PC-9 (cell line): ENCODE measurements at regions of chr10 and their contacts with region 1.

Region 1: GRCh38 chr10:21336476-21337170 is 188.9 kb downstream of the SKIDA1 start:
- DNase-seq: peak; percentile 81 to 85
- H3K4me3 ChIP-seq: peak overlapping the region; percentile 8; the same call in 1 of the 2 replicates
- H3K27ac ChIP-seq: peak overlapping the region; percentile 92
- H3K4me1 ChIP-seq: peaks cover 54% of the 10 kb centered on the region
- H3K27me3 ChIP-seq: no peaks in the 10 kb centered on the region
- CTCF ChIP-seq: no peak

Region 2: GRCh38 chr10:21194464-21194993 is 142.1 kb before region 1 on chr10:
- CTCF ChIA-PET with region 1: no interaction called
- POLR2A ChIA-PET with region 1: no interaction called
- intact Hi-C with region 1: loop called (anchors 1 kb)
- DNase-seq: peak; percentile 76 to 95
- H3K4me3 ChIP-seq: peak overlapping the region; percentile 13; the same call in 1 of the 2 replicates
- H3K27ac ChIP-seq: peak overlapping the region; percentile 96
- H3K4me1 ChIP-seq: peaks cover 50% of the 10 kb centered on the region
- H3K27me3 ChIP-seq: no peaks in the 10 kb centered on the region
- CTCF ChIP-seq: no peak

Region 3: DNA sequence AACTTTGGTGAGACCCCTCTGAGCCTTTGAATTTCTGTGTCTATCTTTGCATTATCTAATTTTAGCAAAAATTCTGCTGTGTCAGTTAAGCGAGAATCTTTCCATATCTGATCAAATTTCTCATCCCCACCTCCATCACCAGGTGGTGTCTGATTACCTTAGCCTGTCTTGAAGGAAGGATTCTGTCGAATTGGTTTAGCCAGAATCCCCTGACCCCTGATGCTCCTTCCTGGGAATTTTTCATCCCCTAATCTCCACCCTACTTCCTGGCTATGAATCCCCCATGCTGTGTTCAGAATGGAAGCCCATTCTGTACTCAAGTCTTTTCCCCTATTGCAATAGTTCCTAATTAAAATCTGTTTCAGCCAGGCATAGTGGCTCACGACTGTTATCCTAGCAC is 27.2 kb before region 1 on chr10:
- CTCF ChIA-PET with region 1: interaction called, 12 read pairs
- POLR2A ChIA-PET with region 1: no interaction called
- intact Hi-C with region 1: no loop called
- DNase-seq: no peak
- H3K4me3 ChIP-seq: no peak overlapping the region
- H3K27ac ChIP-seq: no peak overlapping the region
- H3K4me1 ChIP-seq: peaks cover 3% of the 10 kb centered on the region
- H3K27me3 ChIP-seq: no peaks in the 10 kb centered on the region
- CTCF ChIP-seq: no peak

Region 4: DNA sequence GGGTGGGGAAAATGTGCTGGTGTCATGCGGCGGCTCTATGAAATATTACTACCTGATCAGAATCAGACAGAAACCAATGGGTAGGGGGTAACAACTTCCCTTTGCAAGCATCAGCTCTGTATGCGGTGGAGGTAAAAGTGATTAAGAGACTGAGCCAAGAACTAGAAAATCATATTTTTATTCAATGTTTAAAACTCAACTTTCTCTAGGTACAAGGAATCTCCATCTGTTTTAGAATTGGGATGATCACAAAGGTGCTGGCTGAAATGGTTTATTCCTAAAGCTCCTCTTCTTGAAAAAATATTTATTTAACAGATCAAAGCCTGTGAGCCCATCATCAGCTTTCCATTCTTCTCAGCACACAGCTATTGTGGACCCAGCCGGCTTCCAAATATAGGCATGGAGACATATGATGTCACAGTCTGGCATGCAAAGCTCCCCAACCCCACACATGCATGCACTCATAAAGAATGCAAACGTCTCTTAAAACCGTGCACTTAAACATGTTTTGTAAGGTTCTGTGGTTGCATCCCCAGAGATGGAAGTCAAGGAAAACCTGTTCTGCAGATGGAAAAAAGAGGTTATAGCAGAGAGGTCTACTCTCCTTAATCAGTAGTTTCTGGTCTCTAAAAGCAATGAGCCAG is 62.9 kb after region 1 on chr10:
- CTCF ChIA-PET with region 1: no interaction called
- POLR2A ChIA-PET with region 1: no interaction called
- intact Hi-C with region 1: loop called (anchors 2 kb)
- DNase-seq: peak; percentile 44 to 66
- H3K4me3 ChIP-seq: no peak overlapping the region
- H3K27ac ChIP-seq: peak overlapping the region; percentile 45; the same call in 1 of the 2 replicates
- H3K4me1 ChIP-seq: peaks cover 22% of the 10 kb centered on the region
- H3K27me3 ChIP-seq: no peaks in the 10 kb centered on the region
- CTCF ChIP-seq: no peak

Region 5: DNA sequence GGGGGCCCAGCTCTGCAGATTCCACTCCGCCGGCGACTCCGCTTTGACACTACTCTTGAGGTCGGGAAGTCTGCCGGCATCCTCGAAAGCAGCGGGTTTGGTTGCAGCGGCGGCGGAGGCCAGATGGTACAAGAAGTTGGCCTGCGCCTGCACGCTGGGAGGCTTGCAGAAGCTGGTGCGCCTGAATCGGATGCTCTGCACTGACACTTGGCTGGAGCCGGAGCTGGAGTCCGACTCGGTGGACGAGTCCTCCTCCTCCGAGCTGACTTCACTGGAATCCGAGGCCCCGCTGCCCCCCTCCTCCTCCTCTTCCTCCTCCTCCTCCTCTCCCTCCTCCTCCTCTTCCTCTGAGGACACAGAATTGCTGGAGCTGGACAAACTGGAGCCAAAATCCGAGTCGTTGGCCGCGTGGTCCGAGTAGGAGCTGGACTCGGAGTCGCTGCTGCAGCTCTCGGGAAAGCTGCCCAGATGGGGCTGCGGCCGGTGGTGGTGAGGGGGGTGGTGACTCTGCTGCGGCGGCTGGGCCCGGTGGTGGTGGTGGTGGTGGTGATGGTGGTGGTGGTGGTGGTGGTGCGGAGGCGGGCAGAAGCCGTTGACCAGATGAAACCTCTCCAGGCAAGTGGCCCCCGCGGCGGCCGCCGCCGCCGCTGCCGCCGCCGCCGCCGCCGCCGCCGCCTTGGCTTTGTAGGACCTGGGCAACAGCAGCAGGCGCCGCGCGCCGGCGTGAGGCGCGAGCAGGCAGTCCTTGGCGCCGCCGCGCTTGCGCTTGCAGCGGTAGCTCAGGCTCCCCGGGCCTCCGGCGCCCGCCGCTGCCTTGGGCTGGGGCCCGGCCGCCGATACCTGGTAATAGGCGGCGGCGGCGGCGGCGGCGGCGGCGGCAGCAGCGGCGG is 179.9 kb after region 1 on chr10:
- CTCF ChIA-PET with region 1: no interaction called
- POLR2A ChIA-PET with region 1: interaction called, 14 read pairs
- intact Hi-C with region 1: no loop called
- DNase-seq: peak in 1 of 2 experiments; percentile 52
- H3K4me3 ChIP-seq: peak overlapping the region; percentile 66; the same call in 1 of the 2 replicates
- H3K27ac ChIP-seq: no peak overlapping the region
- H3K4me1 ChIP-seq: peaks cover 26% of the 10 kb centered on the region
- H3K27me3 ChIP-seq: no peaks in the 10 kb centered on the region
- CTCF ChIP-seq: no peak